Right ventricle myocardium inferior (tissue), 1 donor: ENCODE measurements at regions of chr1 and their contacts with region 1.

Region 1: DNA sequence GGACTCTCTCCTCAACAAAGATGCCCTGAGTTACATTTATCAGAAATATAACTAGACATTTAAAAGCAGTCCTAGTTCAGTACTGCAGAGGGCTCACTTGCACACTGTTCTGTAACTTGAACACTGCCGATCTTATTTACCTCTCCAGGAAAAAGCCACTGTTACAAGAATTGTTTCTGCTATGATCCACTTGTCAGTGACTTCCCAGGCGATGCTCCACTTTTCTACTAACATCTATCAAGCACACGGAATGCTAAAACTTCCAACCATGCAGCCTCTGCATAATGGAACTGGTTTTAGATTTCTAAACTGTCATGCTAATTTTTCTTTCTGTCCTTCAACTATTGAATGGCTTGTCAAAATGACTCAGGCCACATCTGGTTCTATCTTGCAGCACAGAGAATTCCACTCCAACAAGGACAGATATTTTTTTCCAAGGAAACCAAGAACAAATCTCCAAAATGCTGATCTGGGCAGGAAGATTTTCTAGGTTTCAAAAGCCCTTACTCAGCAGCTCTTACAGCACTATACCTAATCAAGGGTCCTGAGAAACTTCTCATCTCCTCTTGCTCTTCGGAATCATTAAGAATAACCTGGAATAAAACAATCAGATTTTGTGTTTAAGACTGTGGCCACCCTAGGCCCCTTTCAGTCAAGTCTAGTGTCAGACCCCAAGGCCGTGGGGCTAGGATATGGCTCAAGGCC is 9.9 kb downstream of the SEC16B start:
- DNase-seq: no peak
- ATAC-seq: peak; percentile 50

Region 2: DNA sequence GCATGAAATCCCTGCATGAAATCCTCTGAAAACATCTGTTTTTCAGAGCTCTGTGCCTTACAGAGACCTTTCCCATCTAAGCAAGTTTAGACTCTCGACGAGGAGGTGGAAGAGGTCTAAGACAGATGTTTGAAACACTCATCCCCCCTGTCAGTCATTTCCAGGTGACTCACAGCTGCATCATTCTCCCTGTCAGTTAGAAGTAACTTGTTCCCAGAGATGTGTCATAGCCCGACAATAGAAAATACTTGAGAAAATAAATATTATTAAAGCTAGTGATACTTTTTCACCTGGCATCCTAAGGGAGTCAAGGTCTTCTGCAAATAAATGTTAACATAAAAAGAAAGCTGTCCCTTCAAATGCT is 51.5 kb after region 1 on chr1:
- intact Hi-C with region 1: no loop called
- DNase-seq: no peak
- ATAC-seq: no peak

Region 3: DNA sequence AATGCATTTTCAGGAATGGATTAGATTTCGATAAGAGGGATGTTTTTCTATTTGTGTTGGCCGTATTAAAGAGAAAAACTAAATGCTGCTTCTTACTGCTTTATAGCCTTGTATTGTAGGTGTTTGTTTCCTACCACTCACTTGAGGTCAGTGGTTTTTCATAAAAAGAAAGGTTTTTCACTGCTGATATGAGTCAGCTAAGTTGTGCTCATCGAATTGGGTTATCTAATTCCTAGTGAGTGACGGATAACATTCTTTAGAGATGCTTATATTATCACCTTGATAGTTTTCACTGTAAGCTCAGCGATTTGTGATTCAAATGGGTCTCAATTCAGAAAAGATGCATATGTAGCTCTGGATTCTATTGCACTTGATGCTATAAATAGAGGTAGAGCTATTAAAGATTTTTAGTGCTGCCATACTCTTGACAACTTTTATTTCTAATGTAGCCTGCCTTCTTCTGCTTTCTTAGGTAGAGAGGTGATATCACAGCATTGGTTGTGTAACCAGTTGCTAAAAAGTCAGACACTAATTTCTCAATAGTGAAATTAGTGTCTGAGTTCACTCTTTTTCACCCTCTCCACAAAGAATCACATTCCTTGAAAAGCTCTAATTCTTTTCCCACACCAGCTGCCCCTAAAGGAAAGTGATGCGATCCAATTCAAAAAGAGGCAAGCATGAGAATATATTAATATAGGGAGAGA is 313.9 kb after region 1 on chr1:
- intact Hi-C with region 1: loop called (anchors 10 kb)
- DNase-seq: no peak
- ATAC-seq: no peak